ENCODE measurements at regions of chr14 and their contacts with region 1.

Region 1: DNA sequence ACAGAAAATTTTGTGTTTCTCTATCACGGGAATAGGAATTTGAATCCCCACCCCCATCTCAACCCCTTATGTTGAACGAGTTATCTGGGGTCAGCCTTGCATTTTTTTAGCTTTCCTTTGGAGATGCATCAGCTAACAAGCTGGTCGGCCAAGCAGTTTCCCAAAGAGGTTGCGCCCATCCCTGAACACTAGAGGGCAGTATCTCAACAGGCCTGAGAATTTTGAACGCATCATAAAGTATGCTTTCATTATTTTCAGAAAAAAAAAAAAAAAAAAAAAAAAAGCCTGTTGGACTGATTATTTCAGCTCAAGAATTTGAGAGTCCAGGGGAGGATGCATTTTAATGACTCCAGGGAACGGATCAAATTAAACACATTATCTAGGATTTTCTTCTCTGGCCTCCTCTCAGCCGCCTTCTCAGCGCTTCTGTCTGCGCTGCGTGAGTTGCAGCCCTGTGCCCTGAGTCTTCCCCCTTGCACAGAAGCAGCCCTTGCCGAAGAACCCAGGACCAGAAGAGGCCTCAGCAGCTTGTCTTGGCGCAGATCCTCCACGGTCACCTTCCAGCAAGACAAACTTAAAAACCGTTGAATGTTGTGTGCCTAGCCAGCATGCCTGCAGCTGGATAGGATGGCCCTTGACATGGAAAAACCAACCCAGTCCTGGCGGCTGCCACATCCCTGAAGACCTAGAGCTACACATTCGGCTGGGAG is 76.6 kb upstream of the GZMB start:
- DNase-seq: peak; percentile 4
- H3K4me3 ChIP-seq: no peak overlapping the region
- H3K27ac ChIP-seq: no peak overlapping the region
- H3K27me3 ChIP-seq: no peaks in the 10 kb centered on the region
- CTCF ChIP-seq: peak; percentile 85

Region 2: DNA sequence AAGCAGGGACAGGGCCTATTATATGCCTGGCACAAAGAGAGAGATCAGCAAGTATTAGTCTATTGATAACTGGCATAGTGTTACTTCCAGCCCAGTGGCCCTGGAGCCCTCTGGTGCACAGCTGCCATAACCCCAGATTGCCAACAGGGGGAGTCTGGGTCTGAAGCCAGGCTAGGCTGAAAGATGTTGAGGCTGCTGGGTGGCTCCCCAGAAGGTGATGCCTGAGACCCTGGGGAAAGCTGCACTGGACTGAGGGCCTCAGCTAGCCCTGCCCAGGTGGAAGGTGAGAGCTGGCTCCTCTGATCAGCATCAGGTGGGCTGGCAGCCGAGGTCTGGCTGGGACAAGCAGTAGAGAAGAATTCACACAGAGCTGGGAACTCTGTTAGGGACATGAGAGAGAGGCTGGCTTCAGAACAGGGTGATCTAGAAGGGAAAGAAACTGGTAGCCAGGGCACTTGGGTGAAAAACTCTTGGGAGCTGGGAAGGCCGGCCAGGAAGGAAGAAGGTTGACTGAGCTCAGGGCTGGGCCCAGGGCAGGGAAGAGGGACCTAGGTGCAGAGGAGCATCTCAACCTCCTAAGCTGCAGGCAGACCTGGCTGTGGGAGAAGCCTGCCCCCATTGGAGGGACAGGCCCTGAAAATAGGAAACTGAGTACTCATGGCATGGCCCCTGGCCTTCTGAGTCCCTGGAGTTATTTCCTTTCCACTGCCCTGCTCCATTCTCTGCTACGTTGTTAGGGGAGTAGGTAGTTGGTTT is 104.9 kb before region 1 on chr14:
- CTCF ChIA-PET with region 1: no interaction called
- POLR2A ChIA-PET with region 1: no interaction called
- DNase-seq: no peak
- H3K4me3 ChIP-seq: no peak overlapping the region
- H3K27ac ChIP-seq: no peak overlapping the region
- H3K27me3 ChIP-seq: no peaks in the 10 kb centered on the region
- CTCF ChIP-seq: peak; percentile 52

Region 3: GRCh38 chr14:24680516-24680915 is 30.0 kb before region 1 on chr14:
- CTCF ChIA-PET with region 1: interaction called, 11 read pairs
- POLR2A ChIA-PET with region 1: no interaction called
- DNase-seq: no peak
- H3K4me3 ChIP-seq: no peak overlapping the region
- H3K27ac ChIP-seq: no peak overlapping the region
- H3K27me3 ChIP-seq: no peaks in the 10 kb centered on the region
- CTCF ChIP-seq: no peak

Region 4: GRCh38 chr14:24721775-24722174 is 11.2 kb after region 1 on chr14:
- CTCF ChIA-PET with region 1: interaction called, 29 read pairs
- POLR2A ChIA-PET with region 1: no interaction called
- DNase-seq: no peak
- H3K4me3 ChIP-seq: no peak overlapping the region
- H3K27ac ChIP-seq: no peak overlapping the region
- H3K27me3 ChIP-seq: no peaks in the 10 kb centered on the region
- CTCF ChIP-seq: no peak

Region 5: GRCh38 chr14:24761141-24761540 is 50.6 kb after region 1 on chr14:
- CTCF ChIA-PET with region 1: interaction called, 11 read pairs
- POLR2A ChIA-PET with region 1: no interaction called
- DNase-seq: no peak
- H3K4me3 ChIP-seq: no peak overlapping the region
- H3K27ac ChIP-seq: no peak overlapping the region
- H3K27me3 ChIP-seq: no peaks in the 10 kb centered on the region
- CTCF ChIP-seq: no peak

Region 6: DNA sequence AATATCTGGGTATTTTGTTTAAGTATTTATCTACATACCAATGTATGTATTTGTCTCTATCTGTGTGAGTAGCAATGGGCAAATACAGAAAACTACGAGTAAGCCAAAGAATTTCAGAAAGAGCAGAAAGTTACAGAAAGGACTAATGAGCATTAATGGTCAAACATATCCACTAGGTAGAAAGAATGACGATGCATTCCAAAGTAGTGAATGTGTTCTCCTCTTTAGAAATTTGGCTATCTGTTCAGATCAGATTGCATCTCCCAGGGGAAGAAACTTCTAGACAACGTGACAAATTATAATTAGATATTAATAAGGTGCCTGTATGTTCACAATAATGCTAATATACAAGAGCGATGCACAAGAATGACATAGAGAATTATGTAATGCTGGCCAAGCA is 117.9 kb after region 1 on chr14:
- CTCF ChIA-PET with region 1: no interaction called
- POLR2A ChIA-PET with region 1: no interaction called
- DNase-seq: no peak
- H3K4me3 ChIP-seq: no peak overlapping the region
- H3K27ac ChIP-seq: no peak overlapping the region
- H3K27me3 ChIP-seq: no peaks in the 10 kb centered on the region
- CTCF ChIP-seq: no peak

Region 7: GRCh38 chr14:25132732-25133422 is 422.3 kb after region 1 on chr14:
- CTCF ChIA-PET with region 1: interaction called, 12 read pairs
- POLR2A ChIA-PET with region 1: no interaction called
- DNase-seq: no peak
- H3K4me3 ChIP-seq: no peak overlapping the region
- H3K27ac ChIP-seq: no peak overlapping the region
- H3K27me3 ChIP-seq: no peaks in the 10 kb centered on the region
- CTCF ChIP-seq: peak; percentile 67

Region 8: GRCh38 chr14:25150934-25151790 is 440.6 kb after region 1 on chr14:
- CTCF ChIA-PET with region 1: interaction called, 16 read pairs
- POLR2A ChIA-PET with region 1: no interaction called
- DNase-seq: no peak
- H3K4me3 ChIP-seq: no peak overlapping the region
- H3K27ac ChIP-seq: no peak overlapping the region
- H3K27me3 ChIP-seq: no peaks in the 10 kb centered on the region
- CTCF ChIP-seq: peak; percentile 70

Region 9: DNA sequence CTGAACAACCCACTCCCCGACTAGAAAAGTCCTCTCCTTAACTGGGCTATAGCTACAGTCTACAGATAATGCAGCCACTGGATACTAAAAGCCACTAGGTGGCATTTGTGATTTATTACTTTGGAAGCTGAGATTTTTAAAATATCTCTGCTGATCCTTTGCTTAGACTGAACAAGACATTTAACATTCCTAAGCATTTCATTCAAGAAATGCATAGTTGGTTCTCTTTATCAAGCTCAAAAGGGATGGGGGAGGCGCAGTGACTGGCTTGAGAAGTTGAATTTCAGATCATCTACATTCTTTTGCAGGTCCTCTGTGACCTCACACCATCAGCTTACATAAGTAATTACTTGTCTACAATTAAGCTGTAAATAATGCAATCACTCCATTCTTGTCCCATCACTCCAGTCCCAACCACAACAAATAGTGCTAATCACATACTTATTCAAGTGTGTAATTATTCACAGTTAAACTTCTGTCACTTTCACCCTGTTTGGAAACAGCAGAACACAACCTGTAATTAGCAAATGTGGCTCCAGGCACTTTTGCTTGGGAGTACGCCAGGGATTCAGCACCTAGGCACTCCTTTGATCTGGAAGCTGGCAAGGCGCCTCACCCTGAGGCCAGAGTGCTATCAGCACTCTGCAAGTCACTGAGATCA is 1683.7 kb after region 1 on chr14:
- CTCF ChIA-PET with region 1: interaction called, 15 read pairs
- POLR2A ChIA-PET with region 1: no interaction called
- DNase-seq: no peak
- H3K4me3 ChIP-seq: no peak overlapping the region
- H3K27ac ChIP-seq: no peak overlapping the region
- H3K27me3 ChIP-seq: no peaks in the 10 kb centered on the region
- CTCF ChIP-seq: peak; percentile 34

Measured in AG04450 (cell line).